Activated CD4-positive, alpha-beta memory T cell treated with anti-CD3 and anti-CD28 coated beads, Interleukin-2, amount 10 ng/mL, durations not matched to agents 7 days and 5 days (primary cell): ENCODE measurements at regions of chr10 and their contacts with region 1.

Region 1: GRCh38 chr10:44932517-44933450 is 21.6 kb downstream of the TMEM72 start:
- DNase-seq: peak; percentile 81
- H3K4me3 Mint-ChIP-seq: no peak overlapping the region
- H3K27ac Mint-ChIP-seq: no peak overlapping the region
- H3K4me1 Mint-ChIP-seq: peaks cover 6% of the 10 kb centered on the region
- H3K27me3 Mint-ChIP-seq: no peaks in the 10 kb centered on the region

Region 2: DNA sequence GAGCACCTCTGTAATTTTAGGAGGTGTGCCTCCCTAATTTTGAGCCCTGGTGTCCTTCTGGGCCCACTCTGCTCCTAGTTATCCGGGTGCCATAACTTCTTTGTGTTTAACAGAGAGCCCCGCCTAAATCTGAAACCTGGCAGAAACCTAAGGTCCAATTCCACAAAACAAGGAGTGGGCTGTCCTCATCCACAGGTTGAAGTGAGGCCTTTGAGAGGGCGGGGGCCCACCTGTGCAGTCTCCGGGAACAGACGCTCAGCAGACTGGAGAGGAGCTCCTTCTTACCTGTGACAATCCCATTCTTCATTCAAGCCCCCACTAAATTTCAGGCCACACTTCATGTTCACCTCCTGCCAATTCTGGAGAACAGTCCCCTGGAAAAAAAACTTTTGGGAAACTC is 10.8 kb before region 1 on chr10:
- CTCF ChIA-PET with region 1: interaction called, 15 read pairs
- POLR2A ChIA-PET with region 1: no interaction called
- DNase-seq: no peak
- H3K4me3 Mint-ChIP-seq: no peak overlapping the region
- H3K27ac Mint-ChIP-seq: no peak overlapping the region
- H3K4me1 Mint-ChIP-seq: no peaks in the 10 kb centered on the region
- H3K27me3 Mint-ChIP-seq: peaks cover 11% of the 10 kb centered on the region

Region 3: DNA sequence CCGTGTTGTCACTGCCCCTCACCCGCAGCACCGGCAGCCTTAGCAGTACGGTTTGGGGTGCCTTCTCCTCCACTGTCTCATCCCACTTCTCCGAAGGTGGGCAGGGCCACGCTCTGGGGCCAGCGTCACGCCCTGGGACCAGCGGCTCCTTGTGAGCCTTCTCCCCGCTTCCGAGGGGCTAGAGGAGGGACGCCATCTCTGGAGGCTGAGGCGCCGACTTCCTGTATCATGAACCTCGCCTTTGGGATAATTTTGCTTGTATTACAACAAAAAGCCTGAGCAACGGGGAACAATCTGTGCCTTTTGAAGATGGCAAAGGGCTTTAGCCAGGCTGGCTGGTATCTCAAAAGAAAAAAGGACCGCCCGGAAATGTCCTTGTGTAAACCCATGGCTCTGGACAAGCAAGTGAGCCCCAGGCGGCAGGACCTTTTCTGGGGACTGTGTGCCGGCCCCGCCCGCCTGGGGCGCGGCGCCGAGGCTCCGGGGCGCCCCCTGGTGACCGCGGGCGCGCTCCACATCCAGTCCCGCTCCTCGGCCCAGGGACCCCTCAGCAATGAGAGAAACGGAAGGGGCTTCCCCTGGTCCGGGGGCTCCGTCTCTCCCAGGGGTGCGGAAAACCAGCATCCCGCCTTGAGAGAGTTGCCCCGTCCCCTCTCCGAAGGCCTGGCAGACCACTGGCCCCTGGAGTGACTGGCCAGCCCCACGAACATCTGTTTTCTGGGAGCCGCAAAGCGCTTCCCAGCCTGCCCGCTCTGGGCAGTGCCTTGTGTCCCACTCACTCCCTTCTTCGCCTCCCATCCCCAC is 42.0 kb after region 1 on chr10:
- CTCF ChIA-PET with region 1: interaction called, 17 read pairs
- POLR2A ChIA-PET with region 1: no interaction called
- DNase-seq: peak; percentile 75
- H3K4me3 Mint-ChIP-seq: peak overlapping the region; percentile 63
- H3K27ac Mint-ChIP-seq: peak overlapping the region; percentile 64
- H3K4me1 Mint-ChIP-seq: peaks cover 19% of the 10 kb centered on the region
- H3K27me3 Mint-ChIP-seq: no peaks in the 10 kb centered on the region